Breast epithelium (tissue), 4 donors: ENCODE measurements at regions of chr18 and their contacts with region 1.

Region 1: GRCh38 chr18:67916097-67916496 is 399.6 kb upstream of the DSEL start:
- DNase-seq: no peak
- H3K4me3 ChIP-seq: no peak overlapping the region
- H3K27ac ChIP-seq: no peak overlapping the region
- H3K4me1 ChIP-seq: no peaks in the 10 kb centered on the region
- H3K27me3 ChIP-seq: no peaks in the 10 kb centered on the region
- CTCF ChIP-seq: no peak
- POLR2A ChIP-seq: no peak

Region 2: GRCh38 chr18:66473882-66474281 is 1442.2 kb before region 1 on chr18:
- intact Hi-C with region 1: no loop called
- DNase-seq: no peak
- H3K4me3 ChIP-seq: no peak overlapping the region
- H3K27ac ChIP-seq: no peak overlapping the region
- H3K4me1 ChIP-seq: no peaks in the 10 kb centered on the region
- H3K27me3 ChIP-seq: no peaks in the 10 kb centered on the region
- CTCF ChIP-seq: no peak
- POLR2A ChIP-seq: no peak

Region 3: DNA sequence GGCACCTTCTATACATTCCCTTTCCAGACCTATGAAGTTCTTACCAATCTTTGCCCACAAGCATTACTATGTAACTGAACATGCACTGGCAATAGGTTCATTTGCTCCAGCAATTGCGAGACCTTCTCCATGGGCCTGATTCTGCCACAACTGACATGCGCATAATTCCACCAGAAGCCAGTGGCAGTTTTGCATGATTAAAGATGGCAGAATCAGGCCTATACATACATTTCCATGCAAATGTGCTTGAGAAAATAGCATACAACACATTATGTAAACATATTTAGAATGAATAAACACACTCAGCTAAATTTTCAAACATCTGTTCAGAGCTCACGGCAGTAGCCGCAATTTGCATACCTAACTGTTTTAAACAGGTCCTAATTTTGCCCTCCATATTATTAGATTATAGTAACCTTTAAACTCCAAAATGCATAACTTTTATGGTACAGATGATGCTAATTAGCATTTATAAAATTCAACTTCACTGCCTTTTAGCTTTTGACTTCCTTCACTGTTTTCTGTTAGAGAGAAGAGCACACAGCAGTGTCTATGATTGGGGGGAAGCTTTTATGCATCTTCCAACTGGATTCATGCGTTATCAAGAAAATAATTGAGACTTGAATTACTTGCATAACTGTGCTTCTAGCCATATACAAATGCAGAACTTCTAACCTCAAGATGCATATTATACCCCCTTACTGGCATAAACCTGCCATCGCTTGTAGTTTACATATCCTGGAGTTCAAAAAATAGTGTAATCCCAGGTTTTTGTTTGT is 1156.9 kb before region 1 on chr18:
- intact Hi-C with region 1: no loop called
- DNase-seq: no peak
- H3K4me3 ChIP-seq: no peak overlapping the region
- H3K27ac ChIP-seq: no peak overlapping the region
- H3K4me1 ChIP-seq: no peaks in the 10 kb centered on the region
- H3K27me3 ChIP-seq: no peaks in the 10 kb centered on the region
- CTCF ChIP-seq: no peak
- POLR2A ChIP-seq: no peak

Region 4: DNA sequence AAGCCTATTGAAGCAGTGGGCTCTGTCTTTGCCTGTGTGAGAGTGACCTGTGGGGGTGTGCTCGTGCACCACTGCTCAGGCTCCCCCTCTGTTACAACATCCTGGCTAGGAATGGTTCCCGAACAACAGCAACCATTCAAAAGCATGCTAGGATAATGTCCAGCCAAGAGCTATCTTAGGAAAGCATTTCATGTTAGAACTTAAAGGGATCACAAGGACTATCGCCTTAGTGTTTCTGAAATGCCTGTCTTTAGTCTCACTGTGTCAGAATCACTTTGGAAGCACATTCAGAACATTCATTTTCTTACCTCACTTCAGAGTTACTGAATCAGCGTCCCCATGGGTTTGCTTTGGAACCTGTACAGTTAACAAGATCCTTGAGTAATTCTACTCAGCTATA is 264.7 kb before region 1 on chr18:
- intact Hi-C with region 1: loop called (anchors 10 kb)
- DNase-seq: no peak
- H3K4me3 ChIP-seq: no peak overlapping the region
- H3K27ac ChIP-seq: peak overlapping the region in 1 of 2 donors; percentile 43
- H3K4me1 ChIP-seq: no peaks in the 10 kb centered on the region
- H3K27me3 ChIP-seq: no peaks in the 10 kb centered on the region
- CTCF ChIP-seq: no peak
- POLR2A ChIP-seq: no peak

Region 5: DNA sequence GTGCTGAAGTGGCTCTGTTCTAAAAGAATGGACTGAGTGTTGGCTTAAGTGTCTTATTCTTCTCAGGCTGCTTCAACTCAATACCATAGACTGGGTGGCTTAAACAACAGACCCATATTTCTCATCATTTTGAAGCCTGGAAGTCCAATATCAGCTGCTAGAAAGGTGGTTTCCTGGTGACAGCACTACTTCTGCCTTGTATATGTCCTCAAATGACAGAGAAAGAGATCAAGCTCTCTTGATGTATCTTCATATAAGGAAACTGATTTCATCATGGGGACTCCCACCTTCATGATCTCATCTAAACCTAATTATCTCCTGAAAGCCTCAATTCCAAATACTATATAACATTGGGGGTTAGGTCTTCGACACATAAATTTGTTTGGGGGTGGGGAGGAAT is 50.1 kb after region 1 on chr18:
- intact Hi-C with region 1: no loop called
- DNase-seq: no peak
- H3K4me3 ChIP-seq: no peak overlapping the region
- H3K27ac ChIP-seq: no peak overlapping the region
- H3K4me1 ChIP-seq: no peaks in the 10 kb centered on the region
- H3K27me3 ChIP-seq: no peaks in the 10 kb centered on the region
- CTCF ChIP-seq: no peak
- POLR2A ChIP-seq: no peak

Region 6: DNA sequence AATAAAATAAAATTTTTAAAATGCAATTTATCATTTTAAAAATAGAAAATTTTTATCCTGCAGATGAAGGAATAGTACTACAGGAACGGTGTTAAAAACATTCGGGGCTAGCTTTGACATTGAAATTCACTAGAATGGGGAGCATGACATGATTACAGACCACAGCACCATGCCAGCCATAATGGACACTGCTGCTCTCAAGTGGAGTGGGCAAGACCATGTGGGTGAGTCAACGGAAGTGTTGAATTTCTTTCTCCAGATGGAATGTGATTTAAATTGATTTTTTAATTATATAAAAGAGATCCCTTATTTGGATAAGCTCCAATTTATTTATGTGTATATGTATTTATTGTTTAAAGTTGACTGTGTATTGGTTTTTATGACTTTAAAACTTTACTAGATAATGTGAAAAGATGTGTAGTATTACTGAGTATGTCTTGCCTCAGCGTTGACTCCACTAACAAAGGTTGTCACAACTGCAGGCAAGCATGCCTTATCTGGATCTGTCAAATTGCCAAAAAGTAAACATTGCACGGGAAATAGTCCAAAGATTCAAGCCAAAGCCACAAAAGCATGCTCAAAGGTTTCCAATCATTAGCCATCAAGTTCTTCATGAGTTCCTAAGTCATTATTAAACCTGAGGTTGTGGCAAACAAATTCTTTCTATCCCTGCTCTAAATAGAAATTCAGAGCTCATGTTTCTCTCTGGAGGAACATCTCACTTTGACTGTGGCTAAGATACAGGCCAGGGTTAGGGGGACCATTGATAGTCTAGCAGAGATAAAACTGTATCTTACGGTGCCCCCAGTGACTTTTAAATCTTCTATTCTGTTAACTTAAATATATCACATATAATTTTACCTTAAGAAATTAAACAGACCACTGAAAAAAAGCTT is 262.0 kb after region 1 on chr18:
- intact Hi-C with region 1: no loop called
- DNase-seq: no peak
- H3K4me3 ChIP-seq: no peak overlapping the region
- H3K27ac ChIP-seq: no peak overlapping the region
- H3K4me1 ChIP-seq: no peaks in the 10 kb centered on the region
- H3K27me3 ChIP-seq: peaks cover 0 to 2% of the 10 kb centered on the region in 2 donors
- CTCF ChIP-seq: no peak
- POLR2A ChIP-seq: no peak